Heart left ventricle (tissue), 16 donors: ENCODE measurements at regions of chr9 and their contacts with region 1.

Region 1: DNA sequence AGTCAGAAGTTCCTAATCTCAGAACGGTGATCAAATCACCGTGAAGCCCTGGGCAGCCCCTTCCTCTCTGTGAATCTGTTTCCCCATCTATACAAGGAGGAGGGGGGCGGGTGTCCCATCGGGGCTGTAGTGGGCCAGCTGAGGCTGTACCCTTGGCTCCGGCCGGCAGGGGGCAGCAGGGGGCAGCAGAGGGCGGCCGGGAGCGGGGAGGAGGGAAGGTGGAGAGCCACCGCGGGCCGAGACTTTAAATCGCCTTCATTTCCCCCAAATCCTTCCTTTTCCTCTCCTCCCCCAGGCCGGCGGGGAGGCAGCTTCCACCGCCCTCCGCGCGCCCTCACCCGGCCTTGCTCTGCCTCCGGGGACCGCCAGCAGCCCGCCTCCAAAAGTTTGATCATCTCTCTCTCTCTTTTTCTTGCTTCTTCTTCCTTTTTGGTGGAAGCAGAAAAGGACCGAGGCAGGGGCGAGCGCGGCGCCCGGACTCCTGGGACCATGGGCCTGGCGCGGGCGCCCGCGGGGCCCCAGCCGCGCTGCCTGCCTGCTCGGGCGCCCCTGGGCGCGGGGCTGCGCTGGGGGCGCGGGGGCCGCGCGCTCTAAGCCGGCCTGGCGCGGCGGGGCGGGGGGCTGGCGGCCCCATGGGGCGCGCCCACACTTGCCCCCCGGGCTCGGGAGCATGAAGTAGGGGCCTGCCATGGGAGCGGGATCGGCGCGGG is at the start of gene COL27A1:
- DNase-seq: peak; percentile 80 to 91 (median 86)
- ATAC-seq: peak; percentile 85 to 91 (median 88)
- H3K4me3 ChIP-seq: peak within 1 kb of the TSS; percentile 58 to 84 (median 67)
- H3K27ac ChIP-seq: peak within 1 kb of the TSS in 11 of 12 donors; percentile 24 to 77 (median 75)
- H3K4me1 ChIP-seq: peaks cover 0 to 49% (median 14%) of the 10 kb centered on the region in 12 donors
- H3K27me3 ChIP-seq: peaks cover 0 to 44% (median 17%) of the 10 kb centered on the region in 9 donors
- CTCF ChIP-seq: peak; percentile 88 to 96 (median 94)
- POLR2A ChIP-seq: no peak
- total RNA-seq, gene COL27A1: 2.3 to 10.8 (median 5.2) TPM

Region 2: DNA sequence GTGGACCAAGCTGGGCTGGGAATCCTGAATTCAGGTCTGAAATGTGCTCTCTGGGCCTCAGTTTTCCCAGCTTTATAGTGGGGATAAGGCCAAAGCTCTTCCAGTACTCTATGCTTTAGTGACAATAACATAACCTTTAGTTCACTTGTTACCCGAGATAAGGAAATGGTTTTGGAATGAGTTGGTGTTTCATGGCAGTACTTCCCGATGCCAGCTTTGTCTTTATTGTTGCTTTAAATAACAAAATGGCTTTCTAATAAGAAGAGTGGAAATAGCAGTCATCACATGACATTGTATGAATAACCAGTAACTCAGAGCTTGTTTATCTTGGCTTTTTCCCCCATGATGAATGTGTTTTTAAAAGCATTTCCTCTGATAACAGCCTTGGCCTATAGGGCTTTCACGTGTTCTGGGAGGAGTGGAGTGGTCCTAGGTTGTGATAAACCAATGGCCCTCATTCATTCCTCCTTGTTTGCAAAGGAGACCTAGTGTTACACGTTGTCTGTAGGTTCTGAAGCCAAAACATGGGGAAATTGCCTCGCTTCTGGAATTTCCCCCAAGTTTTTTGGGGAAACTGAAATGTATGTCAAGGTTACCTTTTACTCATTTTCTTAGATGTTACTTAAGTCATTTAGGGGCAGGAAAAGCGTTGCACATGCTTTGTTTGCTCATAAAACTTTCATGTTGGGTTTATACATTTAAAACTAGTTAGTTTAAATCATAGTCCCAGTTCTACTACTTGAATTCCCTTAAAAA is 225.6 kb before region 1 on chr9:
- intact Hi-C with region 1: no loop called
- DNase-seq: no peak
- ATAC-seq: peak in 3 of 4 donors; percentile 34 to 58 (median 47)
- H3K4me3 ChIP-seq: no peak overlapping the region
- H3K27ac ChIP-seq: peak overlapping the region in 1 of 12 donors; percentile 8
- H3K4me1 ChIP-seq: peaks cover 0 to 26% (median 6%) of the 10 kb centered on the region in 12 donors
- H3K27me3 ChIP-seq: no peaks in the 10 kb centered on the region
- CTCF ChIP-seq: no peak
- POLR2A ChIP-seq: no peak

Region 3: GRCh38 chr9:114096041-114096511 is 59.3 kb before region 1 on chr9:
- intact Hi-C with region 1: no loop called
- DNase-seq: no peak
- ATAC-seq: no peak
- H3K4me3 ChIP-seq: no peak overlapping the region
- H3K27ac ChIP-seq: no peak overlapping the region
- H3K4me1 ChIP-seq: peaks cover 0 to 17% (median 5%) of the 10 kb centered on the region in 12 donors
- H3K27me3 ChIP-seq: peaks cover 0 to 32% (median 13%) of the 10 kb centered on the region in 9 donors
- CTCF ChIP-seq: no peak
- POLR2A ChIP-seq: no peak

Region 4: DNA sequence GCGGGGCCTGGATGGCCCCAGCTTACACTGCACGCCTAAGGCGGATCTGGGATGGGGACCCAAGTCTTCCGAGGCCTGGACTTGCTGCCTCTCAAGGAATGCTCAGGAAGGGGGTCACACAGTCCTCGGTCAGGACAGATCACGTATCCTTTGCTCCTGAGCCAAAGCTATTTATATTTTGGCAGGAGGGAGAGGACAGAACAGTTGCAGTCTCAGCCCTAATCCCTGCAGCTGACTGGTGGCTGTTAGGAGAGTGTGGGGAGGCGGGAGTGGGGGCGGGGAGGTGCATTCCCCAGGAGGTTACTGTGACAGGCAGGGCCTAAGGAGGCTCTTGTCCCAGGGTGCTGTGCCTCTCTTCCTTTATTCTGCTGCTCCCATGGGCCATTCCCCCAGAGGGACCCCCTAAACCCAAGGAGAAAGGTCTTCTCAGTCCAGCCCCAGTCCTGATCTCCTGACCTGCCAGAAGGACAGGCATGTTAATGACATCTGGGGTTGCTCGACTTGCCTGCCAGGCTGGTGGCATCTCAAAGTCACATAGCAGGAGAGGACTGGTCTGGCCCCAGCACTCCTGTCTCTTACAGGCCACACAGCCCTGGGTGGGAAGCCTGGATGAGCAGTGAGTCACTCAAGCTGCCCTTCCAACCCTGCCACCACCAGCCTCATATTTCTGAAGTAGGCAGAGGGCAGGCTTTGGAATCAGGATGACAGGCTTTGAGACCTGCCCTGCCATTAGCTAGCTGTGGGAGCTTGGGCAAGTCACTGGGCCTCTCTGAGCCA is 51.8 kb after region 1 on chr9:
- intact Hi-C with region 1: loop called in 2 of 10 experiments (anchors 5 to 10 kb)
- DNase-seq: peak; percentile 75 to 86 (median 79)
- ATAC-seq: peak; percentile 89 to 97 (median 91)
- H3K4me3 ChIP-seq: no peak overlapping the region
- H3K27ac ChIP-seq: peak overlapping the region; percentile 35 to 94 (median 81)
- H3K4me1 ChIP-seq: peaks cover 4 to 47% (median 28%) of the 10 kb centered on the region in 12 donors
- H3K27me3 ChIP-seq: no peaks in the 10 kb centered on the region
- CTCF ChIP-seq: no peak
- POLR2A ChIP-seq: no peak

Region 5: DNA sequence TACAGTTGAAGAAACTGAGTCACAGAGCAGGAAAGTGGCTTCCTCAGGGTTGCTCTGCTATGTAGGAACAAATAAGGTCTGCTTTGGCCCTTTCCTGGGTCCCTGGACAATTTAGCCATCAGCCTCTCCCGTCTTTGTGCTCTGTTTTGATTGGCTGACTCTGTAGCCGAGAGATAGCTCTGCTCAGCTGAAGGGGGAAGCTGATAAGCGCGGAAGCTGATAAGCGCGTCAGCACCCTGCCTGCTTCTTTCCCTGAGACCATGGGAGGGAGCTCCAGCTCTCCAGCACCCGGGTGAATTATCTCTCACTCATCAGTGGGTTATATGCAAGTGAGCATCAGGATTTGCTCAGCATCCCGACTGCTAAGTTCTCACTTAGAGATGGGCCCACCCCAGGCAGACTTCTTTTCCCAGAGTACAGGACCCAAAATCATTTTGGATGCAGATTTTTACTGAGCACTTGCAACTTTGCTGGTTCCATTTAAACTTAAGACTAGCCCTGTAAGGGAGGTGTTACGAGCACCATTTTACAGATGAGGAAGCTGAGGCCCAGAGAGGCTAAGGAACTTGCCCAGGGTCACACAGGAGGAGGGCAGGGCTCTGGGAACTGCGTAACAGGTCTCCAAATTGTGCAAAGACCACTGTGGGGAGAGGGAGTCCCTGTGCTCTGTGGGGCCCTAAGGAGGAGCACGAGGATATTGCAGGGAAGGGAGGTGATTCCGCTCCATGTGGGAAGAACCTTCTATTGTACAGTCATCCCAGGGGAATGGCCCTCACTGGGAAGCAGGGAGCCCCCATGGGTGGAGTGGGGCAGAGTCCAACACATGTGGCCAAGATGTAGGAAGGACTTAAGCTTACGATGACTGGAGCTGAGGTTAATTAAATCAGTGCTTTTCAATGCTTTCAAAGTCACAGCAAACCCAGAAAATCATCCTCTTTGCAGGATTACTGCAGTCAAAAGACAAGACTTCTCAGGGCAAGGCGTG is 83.8 kb after region 1 on chr9:
- intact Hi-C with region 1: loop called in 3 of 10 experiments (anchors 5 kb)
- DNase-seq: peak in 4 of 5 donors; percentile 47 to 66 (median 56)
- ATAC-seq: peak; percentile 54 to 79 (median 68)
- H3K4me3 ChIP-seq: no peak overlapping the region
- H3K27ac ChIP-seq: peak overlapping the region in 8 of 12 donors; percentile 20 to 74 (median 54)
- H3K4me1 ChIP-seq: peaks cover 0 to 46% (median 27%) of the 10 kb centered on the region in 12 donors
- H3K27me3 ChIP-seq: no peaks in the 10 kb centered on the region
- CTCF ChIP-seq: peak in 10 of 12 donors; percentile 17 to 62 (median 34)
- POLR2A ChIP-seq: no peak

Region 6: GRCh38 chr9:114271641-114272081 is 116.2 kb after region 1 on chr9:
- intact Hi-C with region 1: loop called in 6 of 10 experiments (anchors 5 to 10 kb)
- DNase-seq: peak; percentile 45 to 68 (median 60)
- ATAC-seq: peak; percentile 55 to 84 (median 70)
- H3K4me3 ChIP-seq: no peak overlapping the region
- H3K27ac ChIP-seq: no peak overlapping the region
- H3K4me1 ChIP-seq: no peaks in the 10 kb centered on the region
- H3K27me3 ChIP-seq: no peaks in the 10 kb centered on the region
- CTCF ChIP-seq: peak; percentile 8 to 60 (median 47)
- POLR2A ChIP-seq: no peak

Region 7: DNA sequence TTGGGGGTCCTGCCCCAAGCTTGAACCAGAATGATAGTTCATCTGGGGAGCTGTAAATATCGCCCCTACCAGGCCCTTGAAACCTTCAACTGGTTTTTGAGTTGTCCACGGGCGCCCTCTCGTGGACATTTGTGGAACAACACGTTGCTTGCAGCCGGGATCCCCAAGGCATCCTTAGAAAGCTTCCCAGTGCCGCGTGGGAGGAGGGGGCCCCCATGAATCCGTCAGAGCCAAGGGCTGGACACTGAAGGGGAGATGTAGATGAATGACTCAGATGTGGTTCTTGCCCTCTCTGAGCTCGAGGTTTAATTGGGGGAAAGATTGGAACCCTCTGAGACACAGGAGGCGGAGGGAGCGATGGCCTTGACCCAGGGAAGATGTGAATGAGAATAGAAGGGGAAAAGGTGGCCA is 135.7 kb after region 1 on chr9:
- intact Hi-C with region 1: loop called (anchors 1 to 5 kb)
- DNase-seq: peak; percentile 46 to 83 (median 59)
- ATAC-seq: peak in 3 of 4 donors; percentile 38 to 62 (median 49)
- H3K4me3 ChIP-seq: no peak overlapping the region
- H3K27ac ChIP-seq: no peak overlapping the region
- H3K4me1 ChIP-seq: no peaks in the 10 kb centered on the region
- H3K27me3 ChIP-seq: no peaks in the 10 kb centered on the region
- CTCF ChIP-seq: peak; percentile 77 to 96 (median 93)
- POLR2A ChIP-seq: no peak